CD8-positive, alpha-beta T cell (primary cell): ENCODE measurements at regions of chr21 and their contacts with region 1.

Region 1: DNA sequence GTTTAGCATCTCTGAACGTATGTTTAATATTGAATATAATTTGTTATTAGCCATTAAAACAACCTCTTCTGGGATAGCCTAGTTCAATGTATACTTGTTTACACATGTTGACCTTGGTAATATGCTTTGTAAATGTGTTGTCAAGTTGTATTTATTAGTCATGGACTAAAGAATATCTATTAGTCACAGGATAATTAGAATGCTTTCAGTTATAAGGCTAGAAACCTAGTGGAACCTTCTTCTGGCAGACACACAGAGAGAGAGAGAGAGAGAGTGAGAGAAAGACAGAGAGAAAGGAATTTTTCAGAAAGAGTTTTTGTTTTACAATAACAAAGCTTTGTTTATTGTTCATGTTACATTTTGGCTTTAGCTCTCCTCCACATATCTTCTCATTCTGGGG is 181.1 kb upstream of the APP start:
- DNase-seq: no peak
- ATAC-seq: no peak
- H3K4me3 ChIP-seq: no peak overlapping the region
- H3K4me3 Mint-ChIP-seq: no peak overlapping the region
- H3K27ac ChIP-seq: no peak overlapping the region
- H3K27ac Mint-ChIP-seq: no peak overlapping the region
- H3K4me1 ChIP-seq: no peaks in the 10 kb centered on the region
- H3K4me1 Mint-ChIP-seq: no peaks in the 10 kb centered on the region
- H3K27me3 ChIP-seq: no peaks in the 10 kb centered on the region
- H3K27me3 Mint-ChIP-seq: peaks cover 2% of the 10 kb centered on the region
- CTCF ChIP-seq: no peak

Region 2: DNA sequence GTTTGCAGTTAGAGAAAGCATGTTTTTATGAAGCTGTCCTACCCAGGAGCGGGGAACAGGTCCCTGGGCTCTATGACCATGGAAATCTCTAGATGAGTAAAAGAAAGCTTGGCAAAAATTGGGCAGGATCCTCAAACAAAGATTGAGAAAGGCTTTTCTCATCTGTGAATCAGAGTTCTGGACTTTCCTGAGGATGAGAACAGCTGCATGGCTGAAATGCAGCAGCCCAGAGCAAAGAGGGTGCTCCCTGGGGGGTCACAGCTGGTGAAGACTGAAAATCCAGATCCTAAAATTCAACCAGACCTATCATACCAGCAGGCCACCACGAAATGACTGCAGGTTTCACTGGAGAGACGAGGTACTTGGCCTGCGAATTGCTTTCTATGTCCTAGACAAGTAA is 115.4 kb before region 1 on chr21:
- CTCF ChIA-PET with region 1: no interaction called
- POLR2A ChIA-PET with region 1: no interaction called
- intact Hi-C with region 1: no loop called
- DNase-seq: no peak
- ATAC-seq: no peak
- H3K4me3 ChIP-seq: no peak overlapping the region
- H3K4me3 Mint-ChIP-seq: no peak overlapping the region
- H3K27ac ChIP-seq: no peak overlapping the region
- H3K27ac Mint-ChIP-seq: no peak overlapping the region
- H3K4me1 ChIP-seq: no peaks in the 10 kb centered on the region
- H3K4me1 Mint-ChIP-seq: no peaks in the 10 kb centered on the region
- H3K27me3 ChIP-seq: no peaks in the 10 kb centered on the region
- H3K27me3 Mint-ChIP-seq: no peaks in the 10 kb centered on the region
- CTCF ChIP-seq: no peak

Region 3: DNA sequence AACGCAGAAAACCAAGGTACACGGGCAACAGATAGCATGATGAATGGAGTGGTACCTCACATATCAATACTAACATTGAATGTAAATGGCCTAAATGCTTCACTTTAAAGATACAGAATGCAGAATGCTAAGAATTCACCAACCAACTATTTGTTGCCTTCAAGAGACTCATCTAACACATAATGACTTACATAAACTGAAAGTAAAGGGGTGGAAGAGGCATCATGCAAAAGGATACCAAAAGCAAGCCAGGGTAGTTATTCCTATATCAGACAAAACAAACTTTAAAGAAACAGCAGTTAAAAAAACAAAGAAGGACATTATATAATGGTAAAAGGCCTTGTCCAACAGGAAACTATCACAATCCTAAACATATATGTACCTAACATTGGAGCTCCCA is 44.0 kb before region 1 on chr21:
- CTCF ChIA-PET with region 1: no interaction called
- POLR2A ChIA-PET with region 1: no interaction called
- intact Hi-C with region 1: no loop called
- DNase-seq: no peak
- ATAC-seq: no peak
- H3K4me3 ChIP-seq: no peak overlapping the region
- H3K4me3 Mint-ChIP-seq: no peak overlapping the region
- H3K27ac ChIP-seq: no peak overlapping the region
- H3K27ac Mint-ChIP-seq: no peak overlapping the region
- H3K4me1 ChIP-seq: no peaks in the 10 kb centered on the region
- H3K4me1 Mint-ChIP-seq: no peaks in the 10 kb centered on the region
- H3K27me3 ChIP-seq: no peaks in the 10 kb centered on the region
- H3K27me3 Mint-ChIP-seq: peaks cover 2% of the 10 kb centered on the region
- CTCF ChIP-seq: no peak

Region 4: GRCh38 chr21:26320596-26320995 is 31.1 kb before region 1 on chr21:
- CTCF ChIA-PET with region 1: no interaction called
- POLR2A ChIA-PET with region 1: no interaction called
- intact Hi-C with region 1: loop called in 1 of 2 experiments (anchors 1 kb)
- DNase-seq: no peak
- ATAC-seq: no peak
- H3K4me3 ChIP-seq: no peak overlapping the region
- H3K4me3 Mint-ChIP-seq: no peak overlapping the region
- H3K27ac ChIP-seq: no peak overlapping the region
- H3K27ac Mint-ChIP-seq: no peak overlapping the region
- H3K4me1 ChIP-seq: no peaks in the 10 kb centered on the region
- H3K4me1 Mint-ChIP-seq: no peaks in the 10 kb centered on the region
- H3K27me3 ChIP-seq: no peaks in the 10 kb centered on the region
- H3K27me3 Mint-ChIP-seq: peaks cover 2% of the 10 kb centered on the region
- CTCF ChIP-seq: no peak

Region 5: GRCh38 chr21:26490771-26491170 is 139.1 kb after region 1 on chr21:
- CTCF ChIA-PET with region 1: no interaction called
- POLR2A ChIA-PET with region 1: no interaction called
- intact Hi-C with region 1: no loop called
- DNase-seq: no peak
- ATAC-seq: no peak
- H3K4me3 ChIP-seq: no peak overlapping the region
- H3K4me3 Mint-ChIP-seq: no peak overlapping the region
- H3K27ac ChIP-seq: no peak overlapping the region
- H3K27ac Mint-ChIP-seq: no peak overlapping the region
- H3K4me1 ChIP-seq: no peaks in the 10 kb centered on the region
- H3K4me1 Mint-ChIP-seq: no peaks in the 10 kb centered on the region
- H3K27me3 ChIP-seq: no peaks in the 10 kb centered on the region
- H3K27me3 Mint-ChIP-seq: no peaks in the 10 kb centered on the region
- CTCF ChIP-seq: no peak